ENCODE measurements at regions of chr11 and their contacts with region 1.

Region 1: GRCh38 chr11:128884703-128885338 is 6.3 kb upstream of the KCNJ5 start:
- DNase-seq: peak; percentile 48 to 65 (median 51)
- H3K4me3 ChIP-seq: no peak overlapping the region
- H3K27ac ChIP-seq: no peak overlapping the region
- H3K4me1 ChIP-seq: no peaks in the 10 kb centered on the region
- H3K27me3 ChIP-seq: no peaks in the 10 kb centered on the region
- CTCF ChIP-seq: peak; percentile 56 to 70 (median 66)
- EP300 ChIP-seq: no peak
- POLR2A ChIP-seq: no peak

Region 2: GRCh38 chr11:128956401-128957201 is 71.8 kb after region 1 on chr11:
- intact Hi-C with region 1: loop called (anchors 2 to 5 kb)
- DNase-seq: peak in 1 of 5 donors; percentile 29
- H3K4me3 ChIP-seq: no peak overlapping the region
- H3K27ac ChIP-seq: no peak overlapping the region
- H3K4me1 ChIP-seq: no peaks in the 10 kb centered on the region
- H3K27me3 ChIP-seq: no peaks in the 10 kb centered on the region
- CTCF ChIP-seq: peak; percentile 39 to 74 (median 64)
- EP300 ChIP-seq: no peak
- POLR2A ChIP-seq: no peak

Measured in ovary (tissue), 10 donors.